ENCODE measurements at regions of chr22 and their contacts with region 1.

Region 1: DNA sequence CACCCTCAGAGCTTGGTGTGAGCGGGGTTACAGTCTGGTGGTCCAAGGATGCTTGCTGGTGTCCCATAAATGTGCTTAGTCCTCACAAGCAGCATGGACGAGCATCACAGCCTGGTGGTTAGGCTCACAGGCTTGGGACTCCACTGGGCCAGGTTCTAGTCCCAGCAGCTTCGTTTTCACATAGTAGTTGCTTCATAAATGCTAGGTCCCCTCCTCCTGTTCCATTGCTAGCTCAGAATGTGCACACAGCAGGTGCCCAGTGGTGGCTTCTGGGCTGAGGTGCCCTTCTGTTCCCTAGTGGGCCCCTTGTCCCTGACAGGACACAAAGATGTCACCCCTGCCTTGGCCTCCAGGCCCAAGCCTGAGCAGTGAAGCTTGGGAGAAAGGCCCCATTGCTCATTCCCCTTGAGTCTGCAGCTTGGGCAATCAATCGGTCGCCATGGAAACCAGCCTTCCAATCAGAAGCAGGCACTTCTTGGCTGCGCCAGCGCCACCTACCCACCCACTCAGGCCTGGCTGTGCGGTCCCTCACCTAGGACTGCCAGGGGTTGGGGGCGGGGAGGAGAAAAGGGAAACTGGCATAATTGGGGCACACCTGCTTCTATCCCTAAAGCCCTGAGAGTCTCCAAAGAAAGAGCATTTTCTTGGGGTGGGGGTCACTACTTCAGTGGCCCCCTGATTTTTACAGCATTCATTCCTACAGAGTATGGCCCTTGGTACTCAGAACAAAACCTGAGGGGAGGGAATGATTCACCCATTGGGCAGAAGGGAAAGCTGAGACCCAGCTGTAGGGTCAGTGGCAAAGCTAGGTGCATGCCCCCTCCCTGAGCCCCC is 48.1 kb downstream of the CYTH4 start:
- DNase-seq: peak in 3 of 5 donors; percentile 25 to 58 (median 28)
- H3K4me3 ChIP-seq: no peak overlapping the region
- H3K4me3 Mint-ChIP-seq: no peak overlapping the region
- H3K27ac ChIP-seq: no peak overlapping the region
- H3K27ac Mint-ChIP-seq: peak overlapping the region in 2 of 7 donors; percentile 46 to 50
- H3K4me1 ChIP-seq: peaks cover 11% of the 10 kb centered on the region
- H3K4me1 Mint-ChIP-seq: peaks cover 3 to 15% (median 5%) of the 10 kb centered on the region in 4 donors
- H3K27me3 ChIP-seq: peaks cover 17% of the 10 kb centered on the region
- H3K27me3 Mint-ChIP-seq: peaks cover 37 to 48% of the 10 kb centered on the region in 2 donors

Region 2: DNA sequence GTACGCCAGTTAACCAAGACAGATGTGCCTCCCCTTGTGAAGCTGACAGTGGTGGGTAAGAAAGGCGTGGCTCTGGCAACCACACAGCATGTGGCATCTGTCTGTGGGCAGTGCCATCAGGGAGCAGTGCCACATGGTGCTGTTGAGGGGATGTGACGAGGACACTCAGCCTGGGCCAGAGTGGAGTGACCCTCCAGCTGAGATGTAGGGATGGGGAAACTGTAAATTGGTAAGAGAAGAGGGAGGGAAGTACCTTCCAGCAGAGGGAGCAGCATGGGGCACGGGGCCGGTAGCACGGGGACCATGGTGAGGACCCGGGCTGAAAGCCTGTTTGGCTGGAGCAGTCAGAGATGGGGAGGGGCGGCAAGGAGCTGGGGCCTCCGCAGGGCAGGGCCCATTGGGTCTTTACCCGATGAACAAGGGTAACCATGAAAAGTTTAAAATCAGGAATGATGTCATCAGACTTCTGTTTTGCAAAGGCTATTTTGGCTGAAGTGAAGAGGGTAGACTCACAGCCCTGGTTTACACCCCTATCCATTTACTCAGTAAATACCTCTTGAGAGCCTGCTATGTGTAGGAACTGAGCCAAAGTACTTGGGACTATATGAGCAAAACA is 231.3 kb before region 1 on chr22:
- CTCF ChIA-PET with region 1: no interaction called
- POLR2A ChIA-PET with region 1: no interaction called
- intact Hi-C with region 1: no loop called
- DNase-seq: no peak
- H3K4me3 ChIP-seq: no peak overlapping the region
- H3K4me3 Mint-ChIP-seq: no peak overlapping the region
- H3K27ac ChIP-seq: no peak overlapping the region
- H3K27ac Mint-ChIP-seq: peak overlapping the region in 3 of 7 donors; percentile 50 to 73 (median 61)
- H3K4me1 ChIP-seq: no peaks in the 10 kb centered on the region
- H3K4me1 Mint-ChIP-seq: peaks cover 8 to 12% (median 10%) of the 10 kb centered on the region in 4 donors
- H3K27me3 ChIP-seq: no peaks in the 10 kb centered on the region
- H3K27me3 Mint-ChIP-seq: peaks cover 7 to 8% of the 10 kb centered on the region in 2 donors

Region 3: GRCh38 chr22:37345863-37346504 is 15.6 kb after region 1 on chr22:
- CTCF ChIA-PET with region 1: no interaction called
- POLR2A ChIA-PET with region 1: no interaction called
- intact Hi-C with region 1: no loop called
- DNase-seq: no peak
- H3K4me3 ChIP-seq: no peak overlapping the region
- H3K4me3 Mint-ChIP-seq: no peak overlapping the region
- H3K27ac ChIP-seq: no peak overlapping the region
- H3K27ac Mint-ChIP-seq: no peak overlapping the region
- H3K4me1 ChIP-seq: no peaks in the 10 kb centered on the region
- H3K4me1 Mint-ChIP-seq: peaks cover 0 to 1% (median 0%) of the 10 kb centered on the region in 4 donors
- H3K27me3 ChIP-seq: no peaks in the 10 kb centered on the region
- H3K27me3 Mint-ChIP-seq: peaks cover 0 to 2% of the 10 kb centered on the region in 2 donors

Region 4: DNA sequence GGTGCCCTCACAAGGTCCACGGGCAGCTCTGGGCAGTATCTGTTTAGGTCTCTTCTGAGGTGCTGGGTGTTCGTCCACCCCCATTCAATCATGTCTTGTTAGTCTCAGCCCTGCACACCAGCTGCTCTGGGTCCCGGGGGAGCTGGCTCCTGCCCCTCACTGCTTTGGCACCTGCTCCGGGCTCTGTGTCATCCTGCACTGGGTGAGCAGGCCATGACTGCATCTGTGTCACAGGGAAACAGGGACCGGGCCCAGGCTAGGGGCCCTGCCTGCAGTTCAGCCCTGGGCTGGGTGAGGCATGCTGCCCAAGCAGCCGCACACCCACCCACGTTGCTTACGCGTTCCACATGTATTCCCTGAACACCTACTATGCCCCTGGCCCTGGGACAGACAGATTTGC is 52.9 kb after region 1 on chr22:
- CTCF ChIA-PET with region 1: no interaction called
- POLR2A ChIA-PET with region 1: no interaction called
- intact Hi-C with region 1: loop called (anchors 10 kb)
- DNase-seq: no peak
- H3K4me3 ChIP-seq: no peak overlapping the region
- H3K4me3 Mint-ChIP-seq: no peak overlapping the region
- H3K27ac ChIP-seq: no peak overlapping the region
- H3K27ac Mint-ChIP-seq: peak overlapping the region in 1 of 7 donors; percentile 47
- H3K4me1 ChIP-seq: no peaks in the 10 kb centered on the region
- H3K4me1 Mint-ChIP-seq: no peaks in the 10 kb centered on the region
- H3K27me3 ChIP-seq: no peaks in the 10 kb centered on the region
- H3K27me3 Mint-ChIP-seq: peaks cover 6 to 21% of the 10 kb centered on the region in 2 donors